ENCODE measurements at regions of chrX and their contacts with region 1.

Region 1: DNA sequence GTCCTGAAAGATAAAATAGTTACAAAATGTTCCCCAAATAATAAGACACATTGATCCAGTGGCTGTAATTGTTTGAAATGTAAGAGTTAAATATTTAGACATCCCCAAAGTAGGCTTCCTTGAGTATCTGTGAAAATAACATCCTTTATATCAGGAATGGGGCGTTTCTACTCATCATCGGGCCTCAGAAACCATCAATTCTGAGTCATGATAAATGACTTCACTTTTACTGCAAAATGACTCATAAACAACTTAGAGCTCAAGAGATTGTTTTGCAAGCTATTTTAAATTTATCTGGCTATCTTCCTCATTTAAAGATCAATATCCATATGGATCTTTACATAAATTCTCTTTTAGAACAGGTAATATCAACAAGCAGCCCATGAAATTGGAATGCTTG is 369.4 kb upstream of the CNKSR2 start:
- DNase-seq: no peak
- H3K4me3 ChIP-seq: no peak overlapping the region
- H3K27ac ChIP-seq: no peak overlapping the region
- H3K4me1 ChIP-seq: no peaks in the 10 kb centered on the region
- H3K27me3 ChIP-seq: no peaks in the 10 kb centered on the region
- CTCF ChIP-seq: no peak
- EP300 ChIP-seq: no peak
- POLR2A ChIP-seq: no peak

Region 2: DNA sequence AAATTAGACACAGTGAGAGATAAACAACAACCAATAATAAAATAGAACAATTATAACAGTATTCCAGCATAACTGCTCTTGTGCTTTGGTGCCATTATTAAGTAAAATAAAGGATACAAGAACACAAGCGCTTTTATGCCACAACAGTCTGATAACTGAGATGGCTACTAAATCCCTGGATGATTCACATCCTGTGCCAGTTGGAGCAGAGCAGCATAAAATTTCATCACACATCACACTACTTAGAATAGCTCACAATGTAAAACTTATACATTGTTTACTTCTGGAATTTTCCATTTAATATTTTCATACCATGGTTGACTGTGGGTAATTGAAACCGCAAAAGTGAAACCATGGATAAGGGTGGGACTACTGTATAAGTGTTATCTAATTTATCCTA is 30.5 kb before region 1 on chrX:
- intact Hi-C with region 1: loop called in 1 of 4 experiments (anchors 2 kb)
- DNase-seq: no peak
- H3K4me3 ChIP-seq: no peak overlapping the region
- H3K27ac ChIP-seq: no peak overlapping the region
- H3K4me1 ChIP-seq: no peaks in the 10 kb centered on the region
- H3K27me3 ChIP-seq: no peaks in the 10 kb centered on the region
- CTCF ChIP-seq: no peak
- EP300 ChIP-seq: no peak
- POLR2A ChIP-seq: no peak

Region 3: DNA sequence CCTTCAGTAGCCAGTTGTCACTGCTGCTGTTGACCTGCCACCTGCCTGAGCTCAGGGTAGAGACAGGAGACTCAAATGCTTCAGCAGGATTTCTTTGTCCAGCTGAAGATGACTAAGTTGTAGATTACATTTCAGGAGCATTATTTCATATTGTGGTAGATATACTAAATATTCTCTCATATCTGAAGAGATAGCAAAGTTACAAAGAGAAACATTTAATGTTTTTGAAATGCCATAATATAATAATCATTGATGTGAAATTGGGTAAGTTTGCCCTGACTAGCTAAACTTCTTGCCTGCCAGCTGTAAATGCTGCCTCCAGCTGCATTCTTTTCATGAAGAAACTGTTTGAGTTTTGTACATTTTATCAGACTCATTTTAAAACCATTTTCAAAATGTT is 121.8 kb after region 1 on chrX:
- intact Hi-C with region 1: no loop called
- DNase-seq: no peak
- H3K4me3 ChIP-seq: no peak overlapping the region
- H3K27ac ChIP-seq: no peak overlapping the region
- H3K4me1 ChIP-seq: no peaks in the 10 kb centered on the region
- H3K27me3 ChIP-seq: no peaks in the 10 kb centered on the region
- CTCF ChIP-seq: no peak
- EP300 ChIP-seq: no peak
- POLR2A ChIP-seq: no peak